Gastrocnemius medialis (tissue), 4 donors: ENCODE measurements at regions of chr4 and their contacts with region 1.

Region 1: GRCh38 chr4:15805583-15806517 is 27.7 kb downstream of the CD38 start:
- DNase-seq: peak; percentile 18 to 45
- ATAC-seq: peak; percentile 75 to 77
- H3K4me3 ChIP-seq: peak overlapping the region in 2 of 4 donors; percentile 12 to 22
- H3K27ac ChIP-seq: peak overlapping the region; percentile 12 to 86 (median 83)
- H3K4me1 ChIP-seq: peaks cover 38 to 74% of the 10 kb centered on the region in 2 donors
- H3K27me3 ChIP-seq: no peaks in the 10 kb centered on the region
- CTCF ChIP-seq: peak; percentile 66 to 82 (median 74)
- POLR2A ChIP-seq: no peak

Region 2: DNA sequence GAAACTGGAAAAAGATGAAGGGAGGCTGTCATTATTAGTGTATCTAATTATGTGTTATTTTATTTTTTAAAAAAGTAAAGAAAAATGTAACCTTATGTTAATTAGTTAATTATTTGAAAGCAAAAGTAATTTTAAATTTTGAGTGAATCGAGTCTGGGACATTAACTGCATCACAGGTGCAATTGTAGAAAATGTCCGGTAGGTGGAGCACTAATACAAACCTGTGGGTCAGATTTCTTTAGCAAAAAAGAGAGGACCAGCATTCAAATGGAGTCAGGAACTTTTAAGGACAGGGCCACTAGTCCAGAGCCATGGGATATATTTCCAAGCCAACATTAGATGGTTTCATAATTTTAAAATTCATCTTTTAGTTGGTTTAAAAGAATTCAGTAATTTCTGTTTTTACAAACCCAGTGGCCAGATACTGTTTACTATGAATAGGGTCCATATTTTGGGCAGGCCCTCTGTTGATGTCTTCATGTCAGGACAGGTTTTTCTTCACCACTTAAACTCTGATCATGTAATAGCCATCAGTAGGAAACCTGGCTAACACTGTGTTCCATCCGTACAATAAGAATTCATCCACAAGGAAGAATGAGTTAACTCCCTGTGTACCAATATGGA is 75.8 kb before region 1 on chr4:
- in situ Hi-C with region 1: no loop called
- intact Hi-C with region 1: loop called (anchors 1 kb)
- DNase-seq: no peak
- ATAC-seq: peak; percentile 75 to 87
- H3K4me3 ChIP-seq: no peak overlapping the region
- H3K27ac ChIP-seq: no peak overlapping the region
- H3K4me1 ChIP-seq: no peaks in the 10 kb centered on the region
- H3K27me3 ChIP-seq: no peaks in the 10 kb centered on the region
- CTCF ChIP-seq: peak; percentile 58 to 88 (median 71)
- POLR2A ChIP-seq: no peak

Region 3: GRCh38 chr4:15882675-15883086 is 76.8 kb after region 1 on chr4:
- in situ Hi-C with region 1: no loop called
- intact Hi-C with region 1: loop called (anchors 2 kb)
- DNase-seq: peak; percentile 9 to 35
- ATAC-seq: peak; percentile 87 to 97
- H3K4me3 ChIP-seq: no peak overlapping the region
- H3K27ac ChIP-seq: no peak overlapping the region
- H3K4me1 ChIP-seq: no peaks in the 10 kb centered on the region
- H3K27me3 ChIP-seq: no peaks in the 10 kb centered on the region
- CTCF ChIP-seq: peak; percentile 72 to 84 (median 77)
- POLR2A ChIP-seq: no peak

Region 4: DNA sequence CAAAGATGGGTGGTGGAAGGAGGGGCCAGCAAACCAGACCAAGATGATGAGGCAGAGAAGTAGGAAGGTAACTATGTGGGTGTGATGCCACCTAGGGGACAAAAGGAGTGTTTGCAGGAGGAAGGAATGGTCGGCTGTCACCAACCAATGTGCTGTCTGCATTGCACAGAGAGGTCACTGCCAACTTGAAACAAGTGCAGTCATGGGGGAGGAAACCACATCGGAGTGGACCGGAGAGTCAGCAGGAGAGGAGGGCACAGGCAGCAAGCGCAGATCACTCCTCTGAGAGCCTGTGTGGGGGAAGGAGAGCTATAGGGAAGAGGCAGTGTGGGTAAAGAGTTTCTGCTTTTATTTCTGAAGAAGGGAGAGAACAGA is 195.6 kb after region 1 on chr4:
- in situ Hi-C with region 1: loop called in 3 of 4 experiments (anchors 5 to 10 kb)
- intact Hi-C with region 1: no loop called
- DNase-seq: peak; percentile 20 to 56
- ATAC-seq: peak; percentile 89 to 98
- H3K4me3 ChIP-seq: no peak overlapping the region
- H3K27ac ChIP-seq: no peak overlapping the region
- H3K4me1 ChIP-seq: no peaks in the 10 kb centered on the region
- H3K27me3 ChIP-seq: no peaks in the 10 kb centered on the region
- CTCF ChIP-seq: peak; percentile 53 to 81 (median 73)
- POLR2A ChIP-seq: no peak

Region 5: DNA sequence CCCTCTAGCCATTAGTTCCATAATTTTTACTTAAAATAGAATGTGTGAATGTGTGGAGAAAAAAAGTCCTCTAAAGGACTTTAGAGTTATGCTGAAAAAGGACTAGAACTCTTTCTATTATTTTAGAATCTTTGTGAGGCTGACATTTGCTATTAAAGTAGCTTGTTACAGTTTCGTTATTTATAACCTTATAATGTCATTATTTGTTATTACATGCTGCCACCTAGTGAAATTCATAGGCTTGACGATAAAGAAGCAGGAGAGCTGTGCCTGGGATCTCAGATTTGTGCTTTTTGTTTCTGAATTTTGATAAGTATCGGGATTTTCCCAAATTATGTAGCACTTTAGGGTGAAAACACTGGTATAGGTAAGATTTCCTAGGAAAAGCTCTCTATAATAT is 458.9 kb after region 1 on chr4:
- in situ Hi-C with region 1: loop called in 1 of 4 experiments (anchors 25 kb)
- intact Hi-C with region 1: no loop called
- DNase-seq: no peak
- ATAC-seq: peak; percentile 80 to 82
- H3K4me3 ChIP-seq: no peak overlapping the region
- H3K27ac ChIP-seq: no peak overlapping the region
- H3K4me1 ChIP-seq: peaks cover 0 to 7% of the 10 kb centered on the region in 2 donors
- H3K27me3 ChIP-seq: no peaks in the 10 kb centered on the region
- CTCF ChIP-seq: peak; percentile 30 to 70 (median 67)
- POLR2A ChIP-seq: no peak